ENCODE measurements at regions of chr11 and their contacts with region 1.

Region 1: DNA sequence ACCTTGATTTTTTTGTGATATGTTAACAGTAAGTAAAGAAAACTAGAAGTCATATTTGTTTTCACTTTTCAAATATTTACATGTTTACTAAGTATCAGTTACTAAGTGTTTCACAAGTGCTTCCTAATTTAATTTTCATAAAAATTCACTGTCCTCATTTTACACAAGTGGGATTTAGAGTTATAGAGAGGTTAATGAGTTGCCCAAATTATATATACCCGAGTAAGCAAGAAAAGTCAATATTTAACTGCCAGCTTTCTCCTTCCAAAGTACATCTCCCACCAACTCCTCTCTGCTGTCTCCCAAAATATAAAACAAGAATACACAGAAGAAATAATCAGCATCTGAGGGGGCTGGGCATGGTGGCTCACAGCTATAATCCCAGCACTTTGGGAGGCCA is 896.7 kb upstream of the ANO3 start:
- DNase-seq: no peak
- H3K4me3 ChIP-seq: no peak overlapping the region
- H3K27ac ChIP-seq: no peak overlapping the region
- H3K4me1 ChIP-seq: no peaks in the 10 kb centered on the region
- H3K27me3 ChIP-seq: no peaks in the 10 kb centered on the region
- CTCF ChIP-seq: no peak
- POLR2A ChIP-seq: no peak

Region 2: GRCh38 chr11:24617856-24618255 is 817.3 kb before region 1 on chr11:
- intact Hi-C with region 1: loop called (anchors 5 kb)
- DNase-seq: no peak
- H3K4me3 ChIP-seq: no peak overlapping the region
- H3K27ac ChIP-seq: no peak overlapping the region
- H3K4me1 ChIP-seq: no peaks in the 10 kb centered on the region
- H3K27me3 ChIP-seq: no peaks in the 10 kb centered on the region
- CTCF ChIP-seq: no peak
- POLR2A ChIP-seq: no peak

Region 3: DNA sequence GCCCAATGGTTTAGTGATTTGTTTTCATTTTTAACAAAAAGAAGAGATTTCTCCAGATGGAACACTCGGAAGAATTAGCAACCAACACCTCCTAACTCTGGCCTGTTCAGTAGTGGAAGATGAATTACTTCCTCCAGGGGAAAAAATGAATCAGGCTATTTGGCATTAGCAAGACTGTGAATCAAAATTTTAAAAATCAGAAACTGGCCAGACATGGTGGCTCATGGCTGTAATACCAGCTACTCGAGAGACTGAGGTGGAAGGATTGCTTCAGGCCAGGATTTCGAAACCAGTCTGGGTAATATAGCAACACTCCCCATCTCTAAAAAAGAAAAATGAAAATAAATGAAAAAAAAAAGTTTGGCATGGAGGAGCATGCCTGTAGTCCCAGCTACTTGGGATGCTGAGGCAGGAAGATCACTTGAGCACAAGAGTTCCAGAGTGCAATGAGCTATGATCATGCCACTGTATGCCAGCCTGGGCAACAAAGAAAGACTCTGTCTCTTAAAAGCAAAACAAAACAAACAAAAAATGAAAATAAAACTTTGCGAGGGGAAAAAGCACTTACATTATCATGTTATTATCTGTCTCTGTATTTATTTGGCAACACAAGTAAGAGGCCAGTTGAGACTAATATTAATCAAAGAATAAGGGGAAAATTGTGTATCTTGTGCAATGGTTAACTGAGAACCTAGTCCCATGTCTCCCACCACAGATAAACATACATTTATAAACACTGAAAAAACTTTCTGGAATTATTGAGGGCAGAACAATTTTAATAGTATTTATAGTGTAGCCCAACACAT is 100.5 kb after region 1 on chr11:
- intact Hi-C with region 1: no loop called
- DNase-seq: no peak
- H3K4me3 ChIP-seq: no peak overlapping the region
- H3K27ac ChIP-seq: no peak overlapping the region
- H3K4me1 ChIP-seq: no peaks in the 10 kb centered on the region
- H3K27me3 ChIP-seq: no peaks in the 10 kb centered on the region
- CTCF ChIP-seq: no peak
- POLR2A ChIP-seq: no peak

Measured in vagina (tissue), 2 donors.